Vagina (tissue), 2 donors: ENCODE measurements at regions of chr11 and their contacts with region 1.

Region 1: GRCh38 chr11:76919887-76920746 is 59.4 kb downstream of the ACER3 start:
- DNase-seq: no peak
- H3K4me3 ChIP-seq: no peak overlapping the region
- H3K27ac ChIP-seq: no peak overlapping the region
- H3K4me1 ChIP-seq: peaks cover 11% of the 10 kb centered on the region
- H3K27me3 ChIP-seq: no peaks in the 10 kb centered on the region
- CTCF ChIP-seq: peak; percentile 60 to 90 (median 70)
- POLR2A ChIP-seq: no peak

Region 2: DNA sequence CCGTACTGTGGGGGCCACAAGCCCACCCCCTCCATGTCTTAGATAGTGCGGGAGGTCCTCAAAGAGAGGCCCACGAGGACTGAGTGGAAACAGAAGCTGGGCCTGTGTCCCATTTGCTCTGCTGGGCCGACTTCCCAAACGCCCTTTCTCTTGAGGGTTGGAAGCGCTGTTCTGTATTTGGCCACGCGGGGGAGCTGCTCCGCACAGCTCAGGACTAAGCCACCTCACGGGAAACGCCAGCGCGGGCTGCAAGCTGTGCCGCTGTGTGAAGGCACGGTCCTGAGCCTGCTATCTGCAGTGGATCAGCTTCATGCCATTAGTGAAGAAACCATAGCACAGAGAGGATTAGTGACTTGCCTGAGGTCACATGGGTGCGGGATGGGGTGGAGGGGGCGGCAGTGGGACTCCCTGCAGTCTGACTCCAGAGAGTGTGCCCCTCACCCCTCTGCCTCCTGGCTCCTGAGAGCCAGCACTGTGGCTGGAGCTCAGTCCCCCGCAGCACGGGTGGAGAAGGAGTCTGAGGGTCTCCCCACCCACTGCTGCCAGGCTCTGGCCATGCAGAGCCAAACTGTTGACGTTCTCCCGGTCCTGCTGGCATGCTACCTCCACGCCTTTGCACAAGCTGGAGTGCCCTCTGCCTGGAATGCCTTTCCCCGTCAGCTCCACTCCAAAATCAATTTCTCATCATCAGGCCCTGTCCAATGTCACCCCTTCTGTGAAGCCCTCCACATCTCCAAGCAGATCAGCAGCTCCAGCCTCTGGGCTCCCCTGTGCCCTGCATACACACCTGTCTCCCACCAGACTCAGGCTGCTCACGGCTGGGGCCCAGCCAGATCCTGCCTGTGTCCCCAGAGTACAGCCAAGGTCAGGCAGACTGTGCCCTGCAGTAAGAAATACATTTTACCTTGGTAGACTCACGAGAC is 198.1 kb before region 1 on chr11:
- intact Hi-C with region 1: loop called (anchors 10 kb)
- DNase-seq: no peak
- H3K4me3 ChIP-seq: no peak overlapping the region
- H3K27ac ChIP-seq: no peak overlapping the region
- H3K4me1 ChIP-seq: peaks cover 11% of the 10 kb centered on the region
- H3K27me3 ChIP-seq: no peaks in the 10 kb centered on the region
- CTCF ChIP-seq: peak; percentile 76 to 84 (median 81)
- POLR2A ChIP-seq: no peak

Region 3: DNA sequence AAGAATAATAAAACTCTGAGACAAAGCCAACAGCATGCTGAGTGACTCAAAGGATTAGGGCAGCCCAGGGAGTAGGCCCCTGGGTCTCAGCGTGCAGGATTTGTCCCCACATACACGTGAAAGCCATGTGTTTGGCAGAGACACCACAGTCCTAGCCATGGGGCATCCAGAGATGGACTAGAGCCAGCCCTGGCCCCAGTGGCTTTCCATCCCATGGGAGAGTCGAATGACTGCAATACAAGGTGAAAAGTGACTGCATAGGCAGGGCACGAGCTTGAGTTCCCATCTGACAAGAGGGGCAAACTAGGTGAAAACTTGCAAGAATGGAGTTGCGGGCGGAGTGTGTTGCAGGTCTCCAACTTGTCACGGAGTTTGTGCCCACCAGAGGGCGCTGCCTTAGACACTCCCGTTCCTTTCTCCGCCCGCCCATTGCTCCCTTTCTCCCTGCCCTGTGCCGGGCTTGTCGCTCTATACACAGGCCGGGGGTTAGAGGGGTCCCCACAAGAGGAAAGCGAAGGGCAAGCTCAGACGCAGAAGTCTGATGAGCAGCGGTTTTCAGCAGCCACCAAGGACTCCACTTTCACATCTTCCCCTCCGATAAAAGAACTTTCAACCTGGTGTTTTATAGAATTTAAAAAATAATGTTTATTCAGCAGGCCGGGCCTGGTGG is 112.8 kb before region 1 on chr11:
- intact Hi-C with region 1: loop called (anchors 5 kb)
- DNase-seq: peak in 1 of 2 donors; percentile 90
- H3K4me3 ChIP-seq: no peak overlapping the region
- H3K27ac ChIP-seq: peak overlapping the region; percentile 84
- H3K4me1 ChIP-seq: peaks cover 56% of the 10 kb centered on the region
- H3K27me3 ChIP-seq: no peaks in the 10 kb centered on the region
- CTCF ChIP-seq: peak; percentile 62 to 82 (median 67)
- POLR2A ChIP-seq: no peak

Region 4: GRCh38 chr11:76903329-76903728 is 16.8 kb before region 1 on chr11:
- intact Hi-C with region 1: no loop called
- DNase-seq: no peak
- H3K4me3 ChIP-seq: no peak overlapping the region
- H3K27ac ChIP-seq: no peak overlapping the region
- H3K4me1 ChIP-seq: peaks cover 9% of the 10 kb centered on the region
- H3K27me3 ChIP-seq: no peaks in the 10 kb centered on the region
- CTCF ChIP-seq: no peak
- POLR2A ChIP-seq: no peak